Activated naive CD4-positive, alpha-beta T cell treated with anti-CD3 and anti-CD28 coated beads, Interleukin-2, amount 10 ng/mL, durations not matched to agents 7 days and 5 days (primary cell): ENCODE measurements at regions of chr4 and their contacts with region 1.

Region 1: GRCh38 chr4:87093443-87094123 is 126.8 kb downstream of the KLHL8 start:
- DNase-seq: peak; percentile 56
- H3K4me3 Mint-ChIP-seq: no peak overlapping the region
- H3K27ac Mint-ChIP-seq: peak overlapping the region; percentile 21
- H3K4me1 Mint-ChIP-seq: peaks cover 19% of the 10 kb centered on the region
- H3K27me3 Mint-ChIP-seq: no peaks in the 10 kb centered on the region

Region 2: DNA sequence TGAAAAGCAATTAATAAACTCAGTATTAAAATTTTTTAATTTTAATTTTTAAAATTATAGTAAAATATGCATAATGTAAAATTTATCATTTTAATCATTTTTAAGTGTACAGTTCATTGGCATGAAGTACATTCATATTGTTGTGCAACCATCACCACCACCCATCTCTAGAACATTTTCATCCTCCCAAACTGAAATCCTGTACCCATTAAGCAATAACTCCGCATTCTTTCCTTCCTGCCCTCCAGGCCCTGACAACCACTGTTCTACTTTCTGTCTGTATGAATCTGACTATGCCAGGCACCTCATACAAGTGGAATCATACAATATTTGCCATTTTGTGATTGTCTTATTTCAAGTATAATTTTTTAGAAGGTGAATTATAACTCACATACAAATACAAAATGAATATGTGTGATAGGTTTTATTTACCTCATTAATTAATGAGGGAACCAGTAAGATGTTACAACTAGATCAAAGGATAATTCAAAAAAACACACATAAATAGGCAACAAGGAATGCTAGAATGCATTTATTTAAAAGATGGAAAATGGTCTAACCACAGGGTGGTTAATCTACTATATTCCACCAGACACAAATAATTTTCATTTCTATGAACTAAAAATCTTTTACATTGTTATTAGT is 171.9 kb before region 1 on chr4:
- CTCF ChIA-PET with region 1: interaction called, 129 read pairs
- DNase-seq: no peak
- H3K4me3 Mint-ChIP-seq: no peak overlapping the region
- H3K27ac Mint-ChIP-seq: no peak overlapping the region
- H3K4me1 Mint-ChIP-seq: peaks cover 11% of the 10 kb centered on the region
- H3K27me3 Mint-ChIP-seq: peaks cover 4% of the 10 kb centered on the region

Region 3: DNA sequence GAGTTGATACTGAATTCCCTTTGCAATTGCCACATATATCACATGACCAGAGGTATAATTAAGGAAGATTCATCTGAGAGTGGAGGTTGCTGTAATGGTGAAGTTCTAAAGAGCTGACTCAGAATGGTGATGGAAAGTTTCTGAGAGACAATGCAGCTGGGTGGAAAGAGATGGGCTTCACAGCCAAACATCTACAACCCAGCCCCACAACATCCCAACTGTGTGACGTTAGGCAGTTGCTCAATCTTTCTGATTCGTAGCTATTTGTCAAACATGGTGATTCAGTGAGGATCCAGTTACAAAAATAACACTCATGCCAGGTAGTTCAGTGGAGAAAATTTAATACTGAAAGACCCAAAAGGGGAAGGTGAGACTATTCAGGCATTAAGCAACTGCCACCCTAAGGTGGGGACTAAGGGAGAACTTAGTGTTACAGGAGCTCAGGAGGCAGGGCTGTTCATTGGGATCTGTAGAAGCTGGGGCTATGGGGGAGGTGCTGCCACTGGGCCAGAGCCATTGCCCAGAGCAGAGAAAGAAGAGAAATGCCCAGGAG is 165.7 kb before region 1 on chr4:
- CTCF ChIA-PET with region 1: interaction called, 129 read pairs
- DNase-seq: no peak
- H3K4me3 Mint-ChIP-seq: no peak overlapping the region
- H3K27ac Mint-ChIP-seq: no peak overlapping the region
- H3K4me1 Mint-ChIP-seq: no peaks in the 10 kb centered on the region
- H3K27me3 Mint-ChIP-seq: no peaks in the 10 kb centered on the region

Region 4: DNA sequence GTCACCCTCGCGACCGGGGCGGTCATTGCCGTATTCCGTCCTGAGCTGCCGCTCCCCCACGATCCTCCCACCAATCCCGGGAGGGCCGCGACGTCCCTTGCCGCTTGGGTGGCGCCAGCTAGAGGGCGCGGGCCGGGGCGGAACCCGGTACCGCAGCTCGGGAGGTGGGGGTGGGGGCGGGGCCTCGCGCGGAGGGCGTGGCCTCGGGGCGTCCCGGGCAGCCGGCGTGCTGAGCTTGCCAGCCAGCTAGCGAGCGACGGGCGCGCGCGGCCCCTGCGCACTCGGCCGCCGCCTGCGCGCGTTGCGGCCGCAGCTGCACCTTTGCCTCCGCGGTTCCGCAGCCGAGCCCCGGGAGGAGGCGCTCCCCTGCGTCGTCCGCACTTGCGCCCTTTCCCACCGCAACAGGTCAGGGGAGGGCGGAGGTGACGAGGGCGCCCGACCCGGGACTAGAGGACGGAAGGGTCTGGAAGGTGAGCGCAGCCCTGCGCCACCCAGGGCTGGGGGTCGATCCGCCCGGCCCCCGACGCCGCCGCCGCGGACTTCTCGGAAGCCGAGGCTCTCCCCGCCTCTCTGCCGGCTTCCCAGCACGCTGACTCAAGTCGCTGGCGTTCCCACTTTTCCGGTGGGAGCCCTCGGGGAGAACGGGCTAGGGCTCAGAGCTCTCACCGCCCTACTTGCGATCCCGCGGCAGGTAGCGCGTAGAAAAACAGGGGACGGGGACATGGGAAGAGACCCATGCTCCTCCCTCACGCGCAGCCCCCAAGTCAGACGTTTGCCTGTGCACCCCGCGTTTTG is 158.6 kb before region 1 on chr4 and contains the start of gene AFF1:
- CTCF ChIA-PET with region 1: interaction called, 29 read pairs
- DNase-seq: peak; percentile 92
- H3K4me3 Mint-ChIP-seq: peak within 1 kb of the TSS; percentile 86
- H3K27ac Mint-ChIP-seq: peak within 1 kb of the TSS; percentile 96
- H3K4me1 Mint-ChIP-seq: peaks cover 55% of the 10 kb centered on the region
- H3K27me3 Mint-ChIP-seq: no peaks in the 10 kb centered on the region

Region 5: DNA sequence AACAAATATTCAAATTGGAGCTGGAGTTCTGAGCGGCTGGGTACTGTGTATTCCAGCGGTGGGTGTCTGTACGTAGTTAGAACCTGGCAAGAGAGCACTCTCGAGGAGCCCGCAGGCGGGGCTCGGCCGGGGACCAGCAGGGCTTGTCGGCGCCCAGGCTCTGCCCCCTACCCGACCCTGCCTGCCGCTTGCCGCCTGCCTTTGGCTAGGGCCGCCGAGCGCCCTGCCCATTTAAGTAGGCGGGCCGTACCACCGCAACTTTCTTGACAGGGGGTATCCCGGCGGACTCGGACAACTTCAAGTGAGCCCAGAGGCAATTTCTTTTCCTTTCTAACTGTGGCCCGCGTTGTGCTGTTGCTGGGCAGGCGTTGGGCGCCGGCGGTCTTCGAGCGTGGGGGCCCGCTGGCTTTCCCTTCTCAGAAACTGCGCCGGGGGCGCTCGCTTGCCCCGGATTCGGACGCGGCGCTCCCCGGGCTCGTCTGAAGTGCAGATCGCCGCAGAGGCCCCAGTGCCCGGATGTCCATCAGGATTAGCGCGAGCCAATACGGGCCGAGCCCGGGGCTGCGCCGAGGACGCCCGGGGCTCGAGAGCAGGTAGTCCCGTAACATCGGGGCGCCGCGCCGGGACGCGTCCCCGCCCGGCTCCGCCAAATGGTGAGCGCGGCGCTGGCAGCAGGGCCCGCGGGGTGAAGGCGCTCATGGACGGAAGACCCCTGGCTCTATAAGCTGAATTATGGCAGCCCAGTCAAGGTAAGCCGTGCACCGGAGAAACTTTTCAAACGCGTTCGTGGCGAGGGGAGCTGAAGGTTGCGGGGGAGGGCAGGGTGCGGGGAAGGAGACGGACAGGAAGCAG is 86.7 kb before region 1 on chr4:
- CTCF ChIA-PET with region 1: interaction called, 11 read pairs
- DNase-seq: peak; percentile 91
- H3K4me3 Mint-ChIP-seq: peak overlapping the region; percentile 88
- H3K27ac Mint-ChIP-seq: peak overlapping the region; percentile 99
- H3K4me1 Mint-ChIP-seq: peaks cover 57% of the 10 kb centered on the region
- H3K27me3 Mint-ChIP-seq: no peaks in the 10 kb centered on the region

Region 6: GRCh38 chr4:87078987-87079486 is 14.5 kb before region 1 on chr4:
- CTCF ChIA-PET with region 1: interaction called, 10 read pairs
- DNase-seq: no peak
- H3K4me3 Mint-ChIP-seq: no peak overlapping the region
- H3K27ac Mint-ChIP-seq: no peak overlapping the region
- H3K4me1 Mint-ChIP-seq: peaks cover 27% of the 10 kb centered on the region
- H3K27me3 Mint-ChIP-seq: no peaks in the 10 kb centered on the region